Right lobe of liver (tissue), 6 donors: ENCODE measurements at regions of chr7 and their contacts with region 1.

Region 1: GRCh38 chr7:34675749-34676374 is 17.8 kb downstream of the NPSR1 start:
- DNase-seq: no peak
- ATAC-seq: peak in 2 of 4 donors; percentile 55 to 57
- H3K4me3 ChIP-seq: no peak overlapping the region
- H3K27ac ChIP-seq: no peak overlapping the region
- H3K4me1 ChIP-seq: no peaks in the 10 kb centered on the region
- H3K27me3 ChIP-seq: no peaks in the 10 kb centered on the region
- CTCF ChIP-seq: peak; percentile 37 to 53 (median 44)
- POLR2A ChIP-seq: no peak

Region 2: GRCh38 chr7:34282271-34282670 is 393.6 kb before region 1 on chr7:
- intact Hi-C with region 1: no loop called
- DNase-seq: no peak
- ATAC-seq: no peak
- H3K4me3 ChIP-seq: no peak overlapping the region
- H3K27ac ChIP-seq: no peak overlapping the region
- H3K4me1 ChIP-seq: no peaks in the 10 kb centered on the region
- H3K27me3 ChIP-seq: no peaks in the 10 kb centered on the region
- CTCF ChIP-seq: no peak
- POLR2A ChIP-seq: no peak

Region 3: GRCh38 chr7:34759452-34760125 is 83.7 kb after region 1 on chr7:
- intact Hi-C with region 1: loop called in 1 of 2 experiments (anchors 10 kb)
- DNase-seq: no peak
- ATAC-seq: peak; percentile 49 to 77 (median 76)
- H3K4me3 ChIP-seq: no peak overlapping the region
- H3K27ac ChIP-seq: no peak overlapping the region
- H3K4me1 ChIP-seq: no peaks in the 10 kb centered on the region
- H3K27me3 ChIP-seq: no peaks in the 10 kb centered on the region
- CTCF ChIP-seq: peak; percentile 47 to 58 (median 51)
- POLR2A ChIP-seq: no peak